Naive thymus-derived CD8-positive, alpha-beta T cell (primary cell): ENCODE measurements at regions of chr12 and their contacts with region 1.

Region 1: DNA sequence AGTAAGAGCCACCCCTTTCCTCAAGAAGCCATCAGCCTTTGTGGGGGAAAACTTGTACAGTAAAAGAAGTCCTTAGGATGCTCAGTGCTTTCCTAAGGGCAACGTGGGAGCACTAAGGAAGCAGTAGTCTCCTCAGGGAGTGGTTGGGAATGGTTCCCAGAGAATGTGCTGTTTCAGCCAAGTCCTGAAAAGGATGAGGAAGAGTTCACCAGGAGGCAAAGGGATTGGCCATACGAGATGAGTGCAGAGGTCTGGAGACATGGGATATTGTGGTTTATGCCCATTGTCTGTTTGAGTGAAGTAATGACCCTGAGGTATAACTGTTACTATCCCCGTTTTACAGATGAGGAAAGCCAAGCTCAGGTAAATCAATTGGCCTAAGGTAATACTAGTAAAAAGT is 86.0 kb upstream of the ATF1 start:
- DNase-seq: no peak
- ATAC-seq: no peak
- H3K4me3 Mint-ChIP-seq: no peak overlapping the region
- H3K27ac Mint-ChIP-seq: peak overlapping the region in 1 of 10 donors; percentile 66
- H3K4me1 Mint-ChIP-seq: peaks cover 0 to 4% (median 0%) of the 10 kb centered on the region in 4 donors
- H3K27me3 Mint-ChIP-seq: no peaks in the 10 kb centered on the region

Region 2: DNA sequence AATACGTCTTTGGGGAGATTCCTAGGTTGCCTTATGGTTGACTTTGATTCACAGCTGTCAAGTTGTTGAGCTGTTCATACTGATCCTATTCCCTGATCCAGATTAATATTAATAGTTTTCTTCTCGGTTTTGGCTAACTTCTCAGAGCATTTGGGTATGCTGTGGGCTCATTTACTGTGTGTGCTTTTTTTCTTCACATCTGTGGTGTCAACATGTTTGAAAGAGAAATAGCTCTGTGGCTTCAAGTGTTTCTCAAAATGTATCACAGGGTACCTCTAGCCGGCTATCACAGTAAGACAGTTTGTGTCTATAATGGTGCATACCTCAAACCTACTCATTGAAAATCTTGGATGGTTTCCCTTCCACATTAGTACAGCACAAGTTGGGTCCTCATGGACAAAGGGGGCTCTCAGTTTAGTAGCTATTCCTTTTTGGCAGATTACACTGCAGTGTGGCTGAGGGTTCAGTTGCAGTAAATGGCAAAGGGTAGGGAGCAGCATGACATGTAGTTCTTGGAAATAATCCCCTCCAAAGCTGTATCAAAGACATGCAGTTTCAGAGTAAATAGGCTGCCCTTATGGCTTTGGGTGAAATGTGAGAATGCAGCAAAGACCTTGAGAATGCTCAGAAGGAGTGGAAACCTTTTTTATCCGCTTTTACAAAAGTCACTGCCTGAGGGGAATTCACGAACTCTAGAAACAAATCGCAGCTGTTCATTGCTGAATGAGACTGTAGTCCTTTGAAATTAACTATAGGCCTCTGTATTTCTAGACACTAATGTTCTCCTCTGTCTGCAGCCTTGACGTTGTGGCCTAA is 16.4 kb before region 1 on chr12:
- POLR2A ChIA-PET with region 1: no interaction called
- DNase-seq: no peak
- ATAC-seq: no peak
- H3K4me3 Mint-ChIP-seq: no peak overlapping the region
- H3K27ac Mint-ChIP-seq: peak overlapping the region in 1 of 10 donors; percentile 72
- H3K4me1 Mint-ChIP-seq: peaks cover 0 to 1% (median 0%) of the 10 kb centered on the region in 4 donors
- H3K27me3 Mint-ChIP-seq: no peaks in the 10 kb centered on the region

Region 3: GRCh38 chr12:50715174-50715573 is 37.3 kb after region 1 on chr12:
- POLR2A ChIA-PET with region 1: interaction called, 11 read pairs
- DNase-seq: no peak
- ATAC-seq: no peak
- H3K4me3 Mint-ChIP-seq: no peak overlapping the region
- H3K27ac Mint-ChIP-seq: peak overlapping the region in 4 of 10 donors; percentile 9 to 52 (median 32)
- H3K4me1 Mint-ChIP-seq: peaks cover 0 to 2% (median 0%) of the 10 kb centered on the region in 4 donors
- H3K27me3 Mint-ChIP-seq: no peaks in the 10 kb centered on the region